Cardiac septum (tissue), 1 donor: ENCODE measurements at regions of chr22 and their contacts with region 1.

Region 1: DNA sequence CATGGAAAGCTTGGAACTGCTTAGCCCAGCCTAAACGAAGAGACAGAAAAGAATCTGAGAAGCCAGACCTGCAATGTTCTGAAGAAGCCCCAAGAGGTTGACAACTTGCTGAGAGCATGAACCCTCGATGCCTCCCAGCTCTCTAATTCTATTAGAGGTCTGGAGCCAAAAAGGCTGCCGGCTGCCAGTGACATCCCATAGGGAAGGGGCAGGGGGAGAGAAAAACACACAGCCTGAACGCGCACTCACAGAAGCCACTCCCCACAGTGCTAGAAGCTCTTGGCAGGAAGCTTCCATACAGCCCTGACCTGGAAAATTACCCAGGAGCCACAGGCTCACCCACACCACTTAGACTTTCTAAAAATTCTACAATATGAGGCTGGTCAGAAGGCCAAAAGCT is 18.3 kb downstream of the POLDIP3 start:
- DNase-seq: no peak

Region 2: GRCh38 chr22:42509548-42509947 is 86.8 kb before region 1 on chr22:
- intact Hi-C with region 1: no loop called
- DNase-seq: no peak

Region 3: DNA sequence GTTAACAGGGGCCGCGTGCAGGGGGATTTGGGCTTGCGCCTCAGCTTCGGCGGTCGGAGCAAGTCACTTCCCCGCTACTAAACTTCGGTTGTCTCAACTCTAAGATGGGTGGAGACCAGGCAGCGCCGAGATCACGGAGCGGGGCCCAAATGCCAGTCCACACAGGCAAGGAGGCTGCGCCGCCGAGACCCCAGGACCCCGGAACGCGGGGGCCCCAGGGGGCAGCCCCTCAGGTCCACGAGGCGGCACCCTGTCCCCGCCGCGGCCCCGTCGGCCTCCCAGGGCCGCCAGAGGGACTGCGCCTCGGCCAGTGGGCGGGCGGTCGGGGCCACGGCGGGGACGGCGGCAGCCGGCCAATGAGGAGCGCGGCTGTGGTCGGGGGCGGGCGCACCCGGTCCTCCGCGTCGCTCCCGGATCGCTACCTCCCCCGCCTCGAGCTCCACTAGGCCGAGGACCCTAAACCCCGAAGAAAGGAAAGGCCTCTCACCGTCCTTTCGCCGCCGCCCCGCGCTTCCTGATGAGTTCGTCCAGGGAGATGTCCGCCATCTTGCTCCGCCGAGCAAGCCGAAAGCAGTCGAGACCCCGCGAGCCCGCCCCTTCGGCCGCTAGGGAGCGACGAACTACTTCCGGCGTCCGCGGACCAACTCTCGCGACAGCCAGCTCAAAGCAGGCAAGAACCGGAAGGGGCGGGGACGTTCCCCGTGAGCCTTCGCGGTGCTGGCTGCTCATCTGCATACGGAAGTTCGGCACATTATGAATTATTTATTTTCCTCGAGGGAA is 18.2 kb after region 1 on chr22 and contains the start of gene POLDIP3:
- intact Hi-C with region 1: loop called (anchors 2 kb)
- DNase-seq: peak; percentile 100
- total RNA-seq, gene POLDIP3: 34.9 TPM